ENCODE measurements at regions of chr20 and their contacts with region 1.

Region 1: GRCh38 chr20:4076671-4077070 is 61.3 kb upstream of the RNF24 start:
- DNase-seq: peak; percentile 45
- H3K4me3 Mint-ChIP-seq: no peak overlapping the region
- H3K27ac Mint-ChIP-seq: peak overlapping the region; percentile 50
- H3K4me1 Mint-ChIP-seq: peaks cover 26% of the 10 kb centered on the region
- H3K27me3 Mint-ChIP-seq: peaks cover 27% of the 10 kb centered on the region
- CTCF ChIP-seq: no peak

Region 2: DNA sequence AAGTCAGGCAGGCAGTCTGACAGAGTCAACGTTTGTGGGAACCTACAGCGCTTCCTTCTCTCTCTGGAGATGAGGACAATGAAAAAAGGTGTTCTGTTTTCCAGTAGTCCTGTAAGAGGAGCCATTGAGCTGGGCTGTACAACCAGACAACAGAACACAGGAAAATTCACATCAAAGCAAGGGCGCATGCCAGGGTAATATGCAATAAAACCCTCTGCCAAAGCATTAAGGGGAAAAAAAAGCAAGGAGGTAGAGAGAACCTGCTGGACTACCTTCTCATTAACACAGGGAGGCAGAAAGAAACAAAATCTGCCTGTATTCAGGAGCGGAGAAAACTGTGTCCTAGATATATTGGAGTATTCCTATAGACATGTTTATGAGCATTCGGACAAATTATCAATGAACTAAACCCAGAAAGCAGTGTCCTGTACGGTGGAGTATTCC is 62.6 kb before region 1 on chr20:
- CTCF ChIA-PET with region 1: interaction called, 3 read pairs
- intact Hi-C with region 1: loop called (anchors 1 kb)
- DNase-seq: peak; percentile 60
- H3K4me3 Mint-ChIP-seq: peak overlapping the region; percentile 72
- H3K27ac Mint-ChIP-seq: peak overlapping the region; percentile 59
- H3K4me1 Mint-ChIP-seq: peaks cover 48% of the 10 kb centered on the region
- H3K27me3 Mint-ChIP-seq: peaks cover 6% of the 10 kb centered on the region
- CTCF ChIP-seq: peak; percentile 42

Region 3: GRCh38 chr20:4041748-4042411 is 34.8 kb before region 1 on chr20:
- CTCF ChIA-PET with region 1: no interaction called
- intact Hi-C with region 1: loop called (anchors 5 kb)
- DNase-seq: peak; percentile 83
- H3K4me3 Mint-ChIP-seq: no peak overlapping the region
- H3K27ac Mint-ChIP-seq: no peak overlapping the region
- H3K4me1 Mint-ChIP-seq: peaks cover 20% of the 10 kb centered on the region
- H3K27me3 Mint-ChIP-seq: peaks cover 73% of the 10 kb centered on the region
- CTCF ChIP-seq: no peak

Measured in Calu3 (cell line).